Calu3 (cell line): ENCODE measurements at regions of chr17 and their contacts with region 1.

Region 1: DNA sequence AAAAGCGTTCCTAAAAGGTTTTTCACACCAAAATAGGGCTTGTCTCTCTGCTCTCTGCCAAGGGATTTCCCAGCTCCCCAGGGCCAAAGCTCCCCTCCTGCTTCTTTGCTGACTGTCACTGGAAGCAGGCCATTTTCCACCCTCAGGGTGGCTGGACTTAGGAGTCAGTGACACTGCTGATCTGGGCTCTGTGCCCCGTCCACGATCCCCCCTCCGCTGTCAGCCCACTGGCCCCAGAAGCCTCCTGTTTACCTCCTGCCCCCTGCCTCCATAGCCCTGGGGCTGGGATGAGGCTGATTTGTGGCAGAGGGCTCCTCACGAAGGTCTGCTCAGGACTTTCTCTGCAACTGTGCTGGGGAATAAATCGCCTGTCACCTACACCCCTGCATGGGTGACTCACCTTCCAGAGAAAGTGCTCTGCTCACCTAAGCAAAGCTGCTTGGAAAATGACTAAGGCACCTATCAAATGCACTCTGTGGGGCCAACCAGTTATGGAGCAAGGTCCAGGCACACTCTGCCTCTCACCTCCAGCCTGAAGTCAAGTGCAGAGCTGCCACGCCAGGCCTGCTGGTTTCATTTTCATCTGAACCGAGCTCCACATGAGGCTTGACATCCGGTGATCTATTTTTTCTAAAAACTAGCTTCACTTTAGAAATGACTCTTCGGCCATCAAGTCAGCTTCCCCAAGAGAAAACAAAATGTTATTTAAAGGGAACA is 4.9 kb downstream of the MAP3K14 start:
- DNase-seq: peak; percentile 90
- H3K4me3 Mint-ChIP-seq: peak overlapping the region; percentile 88
- H3K27ac Mint-ChIP-seq: peak overlapping the region; percentile 85
- H3K4me1 Mint-ChIP-seq: peaks cover 88% of the 10 kb centered on the region
- H3K27me3 Mint-ChIP-seq: no peaks in the 10 kb centered on the region
- CTCF ChIP-seq: no peak

Region 2: DNA sequence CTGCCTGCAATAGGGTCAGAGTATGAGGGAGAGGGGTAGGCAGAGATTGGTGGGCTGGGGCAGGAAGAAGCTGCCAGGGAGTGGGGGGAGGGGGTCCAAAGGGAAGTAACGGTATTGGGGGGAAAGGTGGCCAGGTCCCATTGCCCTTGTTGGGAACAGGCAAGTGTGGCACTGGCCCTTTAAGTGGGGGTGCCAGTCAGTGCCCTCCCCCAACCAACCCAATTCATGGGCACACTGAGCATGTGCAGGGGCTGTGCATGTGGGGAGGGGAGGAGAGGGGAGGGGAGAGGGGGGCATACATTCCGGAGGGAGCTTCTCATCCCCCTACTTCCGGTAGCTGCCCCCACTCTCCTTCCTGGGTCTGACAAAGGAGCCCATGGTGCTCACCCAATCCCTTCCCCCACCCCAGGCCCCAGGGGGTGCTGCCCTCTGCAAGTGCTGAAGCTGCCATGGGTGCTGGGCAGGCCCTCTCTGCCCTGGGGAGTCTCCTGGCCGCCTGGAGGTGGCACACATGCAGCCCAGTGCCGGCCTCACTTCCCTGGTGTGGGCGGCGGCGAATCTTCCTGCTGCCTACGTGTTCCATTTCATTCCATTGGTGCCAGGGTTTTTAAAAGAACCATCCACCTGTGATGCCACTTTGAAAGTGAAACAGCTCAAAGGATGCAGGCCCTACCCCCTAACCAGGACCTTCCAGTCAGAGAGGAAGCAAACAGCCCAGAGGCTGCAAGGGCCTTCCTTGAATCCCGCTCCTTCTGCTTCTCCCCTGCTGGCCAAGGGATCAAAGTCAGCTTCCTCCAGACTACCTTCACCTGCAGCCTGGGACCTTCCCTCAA is 139.2 kb before region 1 on chr17:
- CTCF ChIA-PET with region 1: no interaction called
- intact Hi-C with region 1: no loop called
- DNase-seq: peak; percentile 99
- H3K4me3 Mint-ChIP-seq: peak overlapping the region; percentile 63
- H3K27ac Mint-ChIP-seq: peak overlapping the region; percentile 96
- H3K4me1 Mint-ChIP-seq: peaks cover 62% of the 10 kb centered on the region
- H3K27me3 Mint-ChIP-seq: no peaks in the 10 kb centered on the region
- CTCF ChIP-seq: peak; percentile 28

Region 3: DNA sequence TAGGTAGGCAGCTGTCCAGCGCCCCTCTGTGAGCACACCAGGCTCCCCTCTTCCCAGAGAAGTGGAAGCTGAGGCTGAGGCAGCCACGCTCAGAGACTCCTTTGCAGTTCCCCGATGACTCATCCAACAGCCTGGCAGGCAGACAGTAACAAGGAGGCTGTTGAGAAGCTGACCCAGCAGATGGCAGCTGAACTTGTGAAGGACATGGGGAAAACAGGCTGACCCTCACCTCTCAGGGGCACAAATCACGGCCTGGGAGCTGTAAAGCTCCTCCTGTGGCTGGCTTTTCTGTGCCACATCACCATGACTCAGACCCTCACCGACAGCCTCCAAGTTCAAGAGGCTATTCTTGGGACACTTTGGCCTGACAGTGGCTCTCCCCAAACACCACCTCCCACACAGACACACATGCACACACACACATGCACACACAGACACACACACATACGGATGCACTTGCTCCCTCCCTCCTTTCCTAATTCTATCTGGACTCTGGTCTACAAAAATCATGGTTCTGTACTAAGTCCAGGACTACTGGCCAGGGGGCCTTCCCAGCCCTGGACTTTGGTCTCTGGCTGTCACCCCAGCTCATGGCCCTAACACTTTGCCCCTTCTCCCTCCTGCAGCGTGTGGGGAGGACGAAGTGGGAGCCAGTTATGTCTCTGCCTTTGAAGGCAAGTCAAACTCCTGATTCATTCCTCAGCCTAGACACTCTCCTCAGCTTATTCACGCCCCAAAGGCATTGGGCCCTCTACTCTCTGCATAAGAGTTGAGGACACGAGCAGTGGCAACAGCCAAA is 18.3 kb before region 1 on chr17:
- CTCF ChIA-PET with region 1: interaction called, 32 read pairs
- intact Hi-C with region 1: no loop called
- DNase-seq: peak; percentile 81
- H3K4me3 Mint-ChIP-seq: peak overlapping the region; percentile 21
- H3K27ac Mint-ChIP-seq: peak overlapping the region; percentile 66
- H3K4me1 Mint-ChIP-seq: peaks cover 73% of the 10 kb centered on the region
- H3K27me3 Mint-ChIP-seq: no peaks in the 10 kb centered on the region
- CTCF ChIP-seq: no peak

Region 4: DNA sequence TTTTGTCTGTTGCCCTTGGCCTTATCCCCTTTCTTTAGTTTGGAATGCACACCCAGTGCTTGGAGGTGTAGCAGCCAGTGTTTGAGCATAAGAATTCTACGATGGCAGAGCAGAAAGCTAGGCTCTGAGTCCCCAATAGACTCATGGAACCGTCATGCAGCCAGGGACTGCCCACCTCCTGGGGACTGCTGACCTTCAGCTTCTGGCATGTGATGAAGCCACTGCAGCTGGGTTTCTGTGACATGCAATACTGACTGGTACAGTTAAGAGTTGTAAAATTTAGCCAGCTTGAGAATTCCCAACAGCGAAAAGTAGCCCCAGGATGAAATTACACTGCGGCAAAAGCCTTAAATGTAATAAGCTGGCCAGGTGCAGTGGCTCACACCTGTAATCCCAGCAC is 13.9 kb after region 1 on chr17:
- CTCF ChIA-PET with region 1: interaction called, 12 read pairs
- intact Hi-C with region 1: no loop called
- DNase-seq: no peak
- H3K4me3 Mint-ChIP-seq: no peak overlapping the region
- H3K27ac Mint-ChIP-seq: no peak overlapping the region
- H3K4me1 Mint-ChIP-seq: peaks cover 16% of the 10 kb centered on the region
- H3K27me3 Mint-ChIP-seq: no peaks in the 10 kb centered on the region
- CTCF ChIP-seq: no peak

Region 5: GRCh38 chr17:45371414-45372327 is 59.8 kb after region 1 on chr17:
- CTCF ChIA-PET with region 1: interaction called, 32 read pairs
- intact Hi-C with region 1: loop called (anchors 2 kb)
- DNase-seq: peak; percentile 100
- H3K4me3 Mint-ChIP-seq: peak overlapping the region; percentile 78
- H3K27ac Mint-ChIP-seq: peak overlapping the region; percentile 88
- H3K4me1 Mint-ChIP-seq: peaks cover 44% of the 10 kb centered on the region
- H3K27me3 Mint-ChIP-seq: no peaks in the 10 kb centered on the region
- CTCF ChIP-seq: no peak